ENCODE measurements at regions of chr1 and their contacts with region 1.

Region 1: GRCh38 chr1:68307378-68307787 is 75.1 kb upstream of the WLS start:
- DNase-seq: no peak
- H3K4me3 ChIP-seq: no peak overlapping the region
- H3K27ac ChIP-seq: peak overlapping the region in 3 of 4 donors; percentile 40 to 76 (median 54)
- H3K4me1 ChIP-seq: peaks cover 0 to 22% (median 15%) of the 10 kb centered on the region in 4 donors
- H3K27me3 ChIP-seq: no peaks in the 10 kb centered on the region
- CTCF ChIP-seq: no peak
- EP300 ChIP-seq: no peak
- POLR2A ChIP-seq: no peak

Region 2: GRCh38 chr1:68255301-68255700 is 52.1 kb before region 1 on chr1:
- intact Hi-C with region 1: loop called (anchors 5 kb)
- DNase-seq: no peak
- H3K4me3 ChIP-seq: no peak overlapping the region
- H3K27ac ChIP-seq: peak overlapping the region; percentile 43 to 74 (median 60)
- H3K4me1 ChIP-seq: peaks cover 0 to 23% (median 13%) of the 10 kb centered on the region in 4 donors
- H3K27me3 ChIP-seq: no peaks in the 10 kb centered on the region
- CTCF ChIP-seq: no peak
- EP300 ChIP-seq: no peak
- POLR2A ChIP-seq: no peak

Region 3: DNA sequence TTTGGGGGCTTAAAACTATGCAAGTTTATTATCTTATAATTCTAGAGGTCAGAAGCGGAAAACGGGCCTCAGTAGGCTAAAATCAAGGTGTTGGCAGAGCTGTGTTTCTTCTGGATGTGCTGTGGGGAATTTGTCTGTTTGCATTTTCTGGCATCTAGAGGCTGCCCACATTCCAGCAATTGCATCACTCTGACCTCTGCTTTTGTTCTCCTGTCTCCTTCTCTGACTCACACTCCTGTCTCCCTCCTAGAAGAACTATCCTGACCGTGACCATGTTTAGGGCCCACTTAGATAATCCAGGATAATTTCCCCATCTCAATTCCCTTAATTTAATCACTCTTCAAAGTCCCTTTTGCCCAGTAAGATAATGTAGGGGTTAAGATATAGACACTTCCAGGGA is 316.9 kb after region 1 on chr1:
- intact Hi-C with region 1: no loop called
- DNase-seq: no peak
- H3K4me3 ChIP-seq: no peak overlapping the region
- H3K27ac ChIP-seq: peak overlapping the region in 2 of 4 donors; percentile 38 to 60
- H3K4me1 ChIP-seq: peaks cover 0 to 16% (median 11%) of the 10 kb centered on the region in 4 donors
- H3K27me3 ChIP-seq: no peaks in the 10 kb centered on the region
- CTCF ChIP-seq: no peak
- EP300 ChIP-seq: no peak
- POLR2A ChIP-seq: no peak

Measured in sigmoid colon (tissue), 7 donors.